ENCODE measurements at regions of chr5 and their contacts with region 1.

Region 1: DNA sequence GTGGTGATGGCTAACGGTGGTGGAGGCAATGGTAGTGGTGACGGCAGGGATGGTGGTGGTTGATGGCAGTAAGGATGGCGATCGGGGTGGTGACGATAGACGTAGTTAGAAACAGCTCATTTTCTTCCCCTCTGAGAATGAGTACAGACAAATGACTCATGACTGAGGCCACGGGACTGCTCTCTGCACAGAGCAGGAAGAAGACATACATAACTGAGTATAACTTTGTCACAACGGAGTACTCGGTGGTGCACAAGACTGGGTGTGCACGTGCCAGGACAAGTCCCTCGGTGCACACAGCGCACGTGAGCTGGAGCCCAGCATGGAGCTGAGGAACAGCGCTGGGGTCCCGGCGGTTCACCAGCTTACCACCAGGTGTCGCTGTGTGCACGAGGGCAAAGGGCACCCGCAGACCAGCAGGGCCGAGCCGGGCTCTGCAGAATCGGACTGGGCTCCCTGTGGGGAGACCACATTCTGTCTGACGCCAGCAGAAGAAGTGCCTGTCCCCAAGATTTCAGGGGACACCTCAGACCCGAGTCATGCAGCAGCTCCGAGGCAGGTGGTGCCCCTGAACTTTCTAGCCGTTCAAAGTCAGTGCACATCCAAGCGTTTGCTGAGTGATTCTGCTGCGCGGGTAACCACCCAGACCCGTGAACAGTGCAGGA is 188.6 kb downstream of the FSTL4 start:
- DNase-seq: peak; percentile 48
- ATAC-seq: peak; percentile 90
- H3K4me3 ChIP-seq: no peak overlapping the region
- H3K27ac ChIP-seq: no peak overlapping the region
- H3K4me1 ChIP-seq: no peaks in the 10 kb centered on the region
- H3K27me3 ChIP-seq: peaks cover 7% of the 10 kb centered on the region
- CTCF ChIP-seq: peak; percentile 97

Region 2: GRCh38 chr5:133081703-133082102 is 342.0 kb before region 1 on chr5:
- CTCF ChIA-PET with region 1: no interaction called
- POLR2A ChIA-PET with region 1: no interaction called
- in situ Hi-C with region 1: no loop called
- intact Hi-C with region 1: no loop called
- DNase-seq: no peak
- ATAC-seq: no peak
- H3K4me3 ChIP-seq: no peak overlapping the region
- H3K27ac ChIP-seq: no peak overlapping the region
- H3K4me1 ChIP-seq: no peaks in the 10 kb centered on the region
- H3K27me3 ChIP-seq: no peaks in the 10 kb centered on the region
- CTCF ChIP-seq: no peak

Region 3: GRCh38 chr5:133390416-133391353 is 33.1 kb before region 1 on chr5:
- CTCF ChIA-PET with region 1: no interaction called
- POLR2A ChIA-PET with region 1: no interaction called
- in situ Hi-C with region 1: no loop called
- intact Hi-C with region 1: no loop called
- DNase-seq: no peak
- ATAC-seq: no peak
- H3K4me3 ChIP-seq: no peak overlapping the region
- H3K27ac ChIP-seq: no peak overlapping the region
- H3K4me1 ChIP-seq: no peaks in the 10 kb centered on the region
- H3K27me3 ChIP-seq: peaks cover 33% of the 10 kb centered on the region
- CTCF ChIP-seq: no peak

Region 4: GRCh38 chr5:133610489-133611356 is 187.0 kb after region 1 on chr5:
- CTCF ChIA-PET with region 1: interaction called, 3 read pairs
- POLR2A ChIA-PET with region 1: no interaction called
- in situ Hi-C with region 1: no loop called
- intact Hi-C with region 1: loop called (anchors 5 kb)
- DNase-seq: no peak
- ATAC-seq: peak; percentile 94
- H3K4me3 ChIP-seq: peak overlapping the region; percentile 20 to 40; a peak in 3 of 4 replicates
- H3K27ac ChIP-seq: no peak overlapping the region
- H3K4me1 ChIP-seq: peaks cover 8% of the 10 kb centered on the region
- H3K27me3 ChIP-seq: peaks cover 53% of the 10 kb centered on the region
- CTCF ChIP-seq: peak; percentile 85

Region 5: DNA sequence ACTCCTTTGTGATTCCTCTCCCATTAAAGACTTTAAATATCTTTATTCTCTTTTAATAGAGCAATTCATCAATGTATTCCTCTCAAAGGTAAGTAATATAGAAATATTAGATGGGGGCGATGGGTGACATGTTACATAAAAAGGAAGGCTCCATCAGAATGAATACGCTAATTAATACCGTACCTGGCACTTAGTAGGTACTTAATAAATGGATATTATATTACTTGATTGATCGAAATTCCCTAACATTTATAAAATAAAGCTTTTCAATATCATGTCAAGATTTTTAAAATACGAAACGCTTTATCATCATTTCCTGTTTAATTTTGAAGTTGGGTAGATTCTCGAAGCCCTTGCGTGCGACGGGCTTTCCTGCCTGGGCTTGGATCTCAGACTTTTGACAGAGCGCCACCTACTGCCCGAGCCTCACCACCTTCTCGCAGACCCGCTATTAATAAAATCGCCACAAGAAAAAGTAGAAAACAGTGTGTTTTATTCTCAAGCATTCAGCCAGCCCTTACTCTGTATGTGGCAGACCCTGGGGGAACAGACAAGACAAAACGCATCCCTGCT is 445.3 kb after region 1 on chr5:
- CTCF ChIA-PET with region 1: interaction called, 10 read pairs
- POLR2A ChIA-PET with region 1: no interaction called
- in situ Hi-C with region 1: no loop called
- intact Hi-C with region 1: loop called (anchors 5 kb)
- DNase-seq: peak; percentile 38
- ATAC-seq: peak; percentile 81
- H3K4me3 ChIP-seq: peak overlapping the region in 1 of 2 experiments; percentile 25; a peak in 2 of 4 replicates
- H3K27ac ChIP-seq: no peak overlapping the region
- H3K4me1 ChIP-seq: peaks cover 6% of the 10 kb centered on the region; the same call in 1 of the 2 replicates
- H3K27me3 ChIP-seq: peaks cover 4% of the 10 kb centered on the region; the same call in 1 of the 2 replicates
- CTCF ChIP-seq: peak; percentile 93

Region 6: DNA sequence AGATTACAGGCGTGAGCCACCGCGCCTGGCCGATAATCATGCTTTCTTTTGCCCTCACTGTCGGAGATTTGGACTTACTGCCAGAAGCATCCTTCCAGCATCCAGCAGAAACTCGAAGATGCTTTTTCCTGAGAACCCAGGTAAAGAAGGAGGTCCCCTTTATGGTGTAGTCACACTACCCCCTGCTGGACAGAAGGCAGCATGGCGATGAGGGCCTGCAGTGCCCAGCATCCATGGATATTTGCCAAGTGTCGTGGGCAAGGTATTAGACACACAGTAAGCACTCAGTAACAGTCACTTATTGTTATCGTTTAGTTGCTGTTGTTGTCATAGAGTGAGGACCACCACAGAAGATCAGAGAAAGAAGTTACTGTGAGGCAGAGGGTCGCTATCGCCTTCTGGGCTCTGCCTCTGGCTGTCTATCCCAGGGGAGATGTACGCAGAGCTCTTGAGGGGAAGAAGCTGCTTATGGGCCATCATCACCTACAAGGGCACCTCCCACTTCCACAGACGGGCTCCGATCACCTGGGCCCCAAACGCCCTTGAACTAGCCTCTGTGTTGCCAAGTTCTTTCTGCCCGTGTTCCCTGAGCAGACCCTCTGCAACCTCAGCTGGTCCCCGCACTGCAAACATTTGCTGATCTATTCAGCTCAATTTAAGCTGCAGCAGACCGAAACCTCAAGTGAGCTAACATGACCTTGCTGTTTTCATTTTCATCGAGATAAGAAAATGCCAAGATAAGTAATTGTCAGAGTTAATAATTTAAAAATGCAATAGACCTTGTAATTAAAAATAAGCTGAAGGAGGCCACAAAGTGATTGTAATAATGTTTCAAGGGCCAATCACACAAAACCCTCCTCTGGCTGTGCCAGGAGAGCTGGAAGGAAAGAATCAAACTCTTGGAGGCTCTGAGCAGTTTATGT is 520.8 kb after region 1 on chr5:
- CTCF ChIA-PET with region 1: no interaction called
- POLR2A ChIA-PET with region 1: no interaction called
- in situ Hi-C with region 1: no loop called
- intact Hi-C with region 1: loop called (anchors 5 kb)
- DNase-seq: peak; percentile 17
- ATAC-seq: peak; percentile 79
- H3K4me3 ChIP-seq: no peak overlapping the region
- H3K27ac ChIP-seq: no peak overlapping the region
- H3K4me1 ChIP-seq: no peaks in the 10 kb centered on the region
- H3K27me3 ChIP-seq: no peaks in the 10 kb centered on the region
- CTCF ChIP-seq: peak; percentile 77

Measured in Panc1 (cell line).